ENCODE measurements at regions of chr9 and their contacts with region 1.

Region 1: DNA sequence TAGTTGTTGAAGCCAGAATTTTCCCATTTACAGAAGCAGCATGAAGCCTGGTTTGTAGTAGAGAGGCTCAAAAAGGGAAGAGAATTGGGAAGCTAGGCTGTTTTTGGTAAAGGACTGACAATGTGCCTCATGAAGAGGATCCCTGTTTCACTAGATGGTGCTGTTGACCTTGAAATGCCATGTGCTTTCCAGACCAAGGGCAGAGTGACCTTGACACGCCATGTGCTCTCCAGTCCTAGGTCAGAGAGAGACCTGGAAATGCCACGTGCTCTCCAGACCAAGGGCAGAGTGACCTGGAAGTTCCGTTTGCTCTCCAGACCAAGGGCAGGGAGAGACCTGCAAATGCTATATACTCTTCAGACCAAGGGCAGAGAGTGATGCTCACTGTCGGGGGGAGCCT is 32.0 kb downstream of the UNC13B start:
- DNase-seq: no peak
- ATAC-seq: 0 out of 2 replicates have a peak, but pooled peaks have one; percentile 73
- H3K4me3 ChIP-seq: no peak overlapping the region
- H3K27ac ChIP-seq: no peak overlapping the region
- H3K4me1 ChIP-seq: no peaks in the 10 kb centered on the region
- H3K27me3 ChIP-seq: no peaks in the 10 kb centered on the region
- CTCF ChIP-seq: peak; percentile 37

Region 2: GRCh38 chr9:35237311-35237710 is 43.5 kb after region 1 on chr9:
- CTCF ChIA-PET with region 1: no interaction called
- POLR2A ChIA-PET with region 1: no interaction called
- in situ Hi-C with region 1: no loop called
- intact Hi-C with region 1: loop called (anchors 10 kb)
- DNase-seq: no peak
- ATAC-seq: no peak
- H3K4me3 ChIP-seq: no peak overlapping the region
- H3K27ac ChIP-seq: no peak overlapping the region
- H3K4me1 ChIP-seq: no peaks in the 10 kb centered on the region
- H3K27me3 ChIP-seq: no peaks in the 10 kb centered on the region
- CTCF ChIP-seq: no peak

Region 3: GRCh38 chr9:35470894-35471293 is 277.1 kb after region 1 on chr9:
- CTCF ChIA-PET with region 1: no interaction called
- POLR2A ChIA-PET with region 1: no interaction called
- in situ Hi-C with region 1: no loop called
- intact Hi-C with region 1: loop called (anchors 10 kb)
- DNase-seq: no peak
- ATAC-seq: no peak
- H3K4me3 ChIP-seq: no peak overlapping the region
- H3K27ac ChIP-seq: no peak overlapping the region
- H3K4me1 ChIP-seq: no peaks in the 10 kb centered on the region
- H3K27me3 ChIP-seq: no peaks in the 10 kb centered on the region
- CTCF ChIP-seq: no peak